ENCODE measurements at regions of chr5 and their contacts with region 1.

Region 1: GRCh38 chr5:61331407-61332357 is at the start of gene ZSWIM6:
- DNase-seq: peak; percentile 93
- ATAC-seq: peak; percentile 60
- H3K4me3 ChIP-seq: peak within 1 kb of the TSS; percentile 95
- H3K27ac ChIP-seq: peak within 1 kb of the TSS; percentile 63
- H3K4me1 ChIP-seq: peaks cover 39% of the 10 kb centered on the region
- H3K27me3 ChIP-seq: no peaks in the 10 kb centered on the region
- CTCF ChIP-seq: no peak
- total RNA-seq, gene ZSWIM6: 3.4 and 4.3 TPM in 2 replicates

Region 2: GRCh38 chr5:60959156-60959555 is 372.5 kb before region 1 on chr5:
- CTCF ChIA-PET with region 1: no interaction called
- POLR2A ChIA-PET with region 1: interaction called, 16 read pairs
- intact Hi-C with region 1: no loop called
- DNase-seq: peak; percentile 51
- ATAC-seq: no peak
- H3K4me3 ChIP-seq: no peak overlapping the region
- H3K27ac ChIP-seq: no peak overlapping the region
- H3K4me1 ChIP-seq: no peaks in the 10 kb centered on the region
- H3K27me3 ChIP-seq: no peaks in the 10 kb centered on the region
- CTCF ChIP-seq: peak; percentile 52; the same call in 1 of the 2 replicates

Region 3: DNA sequence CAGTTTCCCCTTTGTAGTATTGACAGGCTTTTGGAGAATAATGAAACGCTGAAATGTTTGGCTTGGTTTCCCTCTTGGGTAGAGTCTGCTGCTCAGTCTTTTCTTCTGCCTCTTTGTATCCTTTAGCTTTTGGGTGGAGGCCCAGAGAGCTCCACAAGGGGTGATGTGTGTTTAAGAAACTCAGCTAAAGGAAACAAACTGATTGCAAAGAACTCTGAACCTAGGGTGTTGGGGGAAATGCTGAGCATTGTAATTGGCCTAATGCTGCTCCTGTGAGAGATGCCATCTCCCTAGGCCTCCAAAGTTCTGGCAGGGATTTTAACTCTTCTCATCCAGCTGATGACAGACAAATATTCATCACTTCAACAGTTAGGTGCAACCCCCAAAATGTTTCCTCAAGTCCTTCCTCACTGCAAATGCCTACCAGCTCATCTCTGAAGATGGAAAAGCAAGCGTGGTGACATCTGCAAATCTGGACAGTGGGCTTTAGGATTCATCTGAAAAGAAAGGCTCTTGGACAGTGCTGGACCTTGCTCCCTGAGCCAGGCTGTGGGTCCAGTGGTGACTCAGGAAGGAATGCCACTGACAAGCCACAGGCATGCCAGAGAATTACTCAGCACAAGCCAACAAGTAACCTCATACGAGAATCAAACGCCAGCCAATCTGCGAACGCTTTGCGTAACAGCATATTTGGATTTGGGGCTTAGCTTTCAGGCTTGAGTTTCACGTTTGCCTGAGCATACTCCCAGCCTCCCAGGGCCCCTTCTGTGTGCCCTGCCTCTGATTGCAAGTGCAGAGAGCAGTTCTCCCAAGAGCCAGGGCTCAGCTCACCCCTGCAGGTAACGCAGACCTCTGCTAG is 30.1 kb before region 1 on chr5:
- CTCF ChIA-PET with region 1: no interaction called
- POLR2A ChIA-PET with region 1: interaction called, 26 read pairs
- intact Hi-C with region 1: loop called (anchors 2 kb)
- DNase-seq: peak; percentile 94
- ATAC-seq: peak; percentile 86
- H3K4me3 ChIP-seq: peak overlapping the region; percentile 63
- H3K27ac ChIP-seq: peak overlapping the region; percentile 97
- H3K4me1 ChIP-seq: peaks cover 74% of the 10 kb centered on the region
- H3K27me3 ChIP-seq: no peaks in the 10 kb centered on the region
- CTCF ChIP-seq: no peak

Region 4: GRCh38 chr5:61423487-61424145 is 91.9 kb after region 1 on chr5:
- CTCF ChIA-PET with region 1: no interaction called
- POLR2A ChIA-PET with region 1: interaction called, 19 read pairs
- intact Hi-C with region 1: no loop called
- DNase-seq: no peak
- ATAC-seq: no peak
- H3K4me3 ChIP-seq: no peak overlapping the region
- H3K27ac ChIP-seq: no peak overlapping the region
- H3K4me1 ChIP-seq: no peaks in the 10 kb centered on the region
- H3K27me3 ChIP-seq: no peaks in the 10 kb centered on the region
- CTCF ChIP-seq: no peak

Region 5: GRCh38 chr5:61641747-61642578 is 310.3 kb after region 1 on chr5:
- CTCF ChIA-PET with region 1: no interaction called
- POLR2A ChIA-PET with region 1: no interaction called
- intact Hi-C with region 1: loop called (anchors 1 kb)
- DNase-seq: no peak
- ATAC-seq: peak; percentile 64
- H3K4me3 ChIP-seq: no peak overlapping the region
- H3K27ac ChIP-seq: no peak overlapping the region
- H3K4me1 ChIP-seq: no peaks in the 10 kb centered on the region; the same call in 1 of the 2 replicates
- H3K27me3 ChIP-seq: no peaks in the 10 kb centered on the region
- CTCF ChIP-seq: 0 out of 2 replicates have a peak, but pooled peaks have one; percentile 14

Region 6: GRCh38 chr5:61933787-61934626 is 602.3 kb after region 1 on chr5:
- CTCF ChIA-PET with region 1: no interaction called
- POLR2A ChIA-PET with region 1: no interaction called
- intact Hi-C with region 1: loop called (anchors 5 kb)
- DNase-seq: peak; percentile 68
- ATAC-seq: peak; percentile 54
- H3K4me3 ChIP-seq: no peak overlapping the region
- H3K27ac ChIP-seq: no peak overlapping the region
- H3K4me1 ChIP-seq: no peaks in the 10 kb centered on the region
- H3K27me3 ChIP-seq: no peaks in the 10 kb centered on the region
- CTCF ChIP-seq: peak; percentile 71